ENCODE measurements at regions of chr10 and their contacts with region 1.

Region 1: GRCh38 chr10:63083904-63084689 is 49.0 kb upstream of the NRBF2 start:
- DNase-seq: peak; percentile 62
- ATAC-seq: peak; percentile 78
- H3K4me3 Mint-ChIP-seq: no peak overlapping the region
- H3K27ac Mint-ChIP-seq: no peak overlapping the region
- H3K4me1 Mint-ChIP-seq: no peaks in the 10 kb centered on the region
- H3K27me3 Mint-ChIP-seq: peaks cover 17% of the 10 kb centered on the region

Region 2: GRCh38 chr10:62437696-62438095 is 646.4 kb before region 1 on chr10:
- CTCF ChIA-PET with region 1: no interaction called
- POLR2A ChIA-PET with region 1: no interaction called
- intact Hi-C with region 1: loop called (anchors 5 to 10 kb)
- DNase-seq: no peak
- ATAC-seq: no peak
- H3K4me3 Mint-ChIP-seq: no peak overlapping the region
- H3K27ac Mint-ChIP-seq: no peak overlapping the region
- H3K4me1 Mint-ChIP-seq: peaks cover 19% of the 10 kb centered on the region
- H3K27me3 Mint-ChIP-seq: peaks cover 20% of the 10 kb centered on the region

Region 3: DNA sequence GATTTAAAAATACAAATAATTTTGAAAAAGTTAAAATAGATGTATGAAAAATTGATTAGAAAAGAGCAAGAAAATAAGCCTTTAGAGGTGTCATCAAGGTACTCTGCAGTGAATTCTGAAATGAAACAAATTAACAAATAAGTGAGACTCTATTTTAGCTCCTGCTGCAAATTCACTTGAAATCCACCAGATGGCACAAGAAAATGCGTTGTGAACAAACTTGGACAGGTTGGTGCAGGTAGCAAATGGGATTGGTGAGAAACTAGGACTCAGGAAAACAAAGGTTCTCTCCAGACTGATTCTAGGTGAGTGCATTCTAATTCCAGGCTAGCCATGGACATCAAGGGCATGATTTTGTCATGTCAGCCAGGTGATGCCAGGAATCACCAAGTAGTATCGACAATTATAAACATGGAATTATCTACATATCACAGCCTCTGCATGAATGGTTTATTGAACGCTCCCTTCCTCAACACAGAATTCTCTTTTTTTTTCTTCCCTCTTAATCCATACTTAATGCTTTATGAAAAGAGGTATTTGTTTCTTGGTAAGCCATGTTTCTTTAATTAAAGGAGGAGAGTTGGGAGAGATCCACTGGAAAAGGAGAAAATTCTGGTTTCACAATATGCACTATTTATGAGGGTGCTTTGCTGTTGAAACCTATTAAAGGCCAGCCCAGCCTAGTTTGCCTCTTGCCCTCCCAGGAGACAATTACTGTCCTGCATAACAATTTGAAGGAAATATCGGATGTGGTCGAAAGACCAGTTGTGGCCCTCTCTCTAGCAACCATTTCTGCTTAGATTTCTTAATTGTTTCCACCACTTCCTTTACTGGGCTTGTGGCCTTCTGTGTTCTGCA is 591.9 kb before region 1 on chr10:
- CTCF ChIA-PET with region 1: no interaction called
- POLR2A ChIA-PET with region 1: no interaction called
- intact Hi-C with region 1: loop called (anchors 5 kb)
- DNase-seq: no peak
- ATAC-seq: no peak
- H3K4me3 Mint-ChIP-seq: no peak overlapping the region
- H3K27ac Mint-ChIP-seq: no peak overlapping the region
- H3K4me1 Mint-ChIP-seq: no peaks in the 10 kb centered on the region
- H3K27me3 Mint-ChIP-seq: peaks cover 3% of the 10 kb centered on the region

Region 4: DNA sequence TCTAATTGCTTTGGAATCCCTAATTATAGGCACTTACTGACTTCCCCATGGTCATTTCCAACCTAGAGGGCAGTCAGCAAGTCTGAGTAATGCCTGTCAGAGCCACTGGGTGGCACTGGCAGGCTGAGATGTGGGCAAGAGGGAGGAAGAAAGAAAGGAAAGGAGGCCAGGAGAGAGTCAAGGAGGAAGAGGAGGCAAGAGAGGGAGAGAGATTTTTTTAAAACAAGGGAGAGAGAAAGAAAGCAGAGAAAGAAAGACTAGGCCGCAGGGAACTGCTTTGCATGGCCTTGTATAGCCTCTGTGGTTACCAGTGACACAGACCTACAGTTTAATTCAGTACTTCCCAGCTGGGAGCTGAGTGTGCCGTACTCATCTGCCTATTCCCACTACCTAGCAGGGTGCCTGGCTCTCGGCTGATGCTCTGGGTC is 490.0 kb before region 1 on chr10:
- CTCF ChIA-PET with region 1: interaction called, 8 read pairs
- POLR2A ChIA-PET with region 1: no interaction called
- intact Hi-C with region 1: loop called (anchors 1 kb)
- DNase-seq: peak; percentile 71
- ATAC-seq: peak; percentile 84
- H3K4me3 Mint-ChIP-seq: no peak overlapping the region
- H3K27ac Mint-ChIP-seq: no peak overlapping the region
- H3K4me1 Mint-ChIP-seq: peaks cover 4% of the 10 kb centered on the region
- H3K27me3 Mint-ChIP-seq: peaks cover 14% of the 10 kb centered on the region

Region 5: GRCh38 chr10:62610649-62611229 is 473.4 kb before region 1 on chr10:
- CTCF ChIA-PET with region 1: interaction called, 14 read pairs
- POLR2A ChIA-PET with region 1: no interaction called
- intact Hi-C with region 1: loop called (anchors 1 kb)
- DNase-seq: peak; percentile 87
- ATAC-seq: peak; percentile 79
- H3K4me3 Mint-ChIP-seq: no peak overlapping the region
- H3K27ac Mint-ChIP-seq: no peak overlapping the region
- H3K4me1 Mint-ChIP-seq: peaks cover 27% of the 10 kb centered on the region
- H3K27me3 Mint-ChIP-seq: peaks cover 14% of the 10 kb centered on the region

Region 6: DNA sequence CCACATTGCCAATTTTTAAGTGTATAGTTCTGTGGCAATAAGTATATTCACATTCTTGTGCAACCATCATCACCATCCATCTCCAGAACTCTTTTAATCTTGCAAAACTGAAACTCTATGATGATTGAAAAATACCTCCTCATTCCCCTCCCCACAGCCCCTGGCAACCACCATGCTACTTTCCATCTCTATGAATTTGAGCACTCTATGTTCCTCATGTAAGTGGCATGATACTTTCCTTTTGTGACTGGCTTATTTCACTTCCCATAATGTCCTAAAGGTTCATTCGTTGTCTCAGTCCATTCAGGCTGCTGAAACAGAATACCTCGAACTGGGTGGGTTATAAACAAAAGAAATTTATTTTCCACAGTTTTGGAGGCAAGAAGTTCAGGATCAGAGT is 244.5 kb before region 1 on chr10:
- CTCF ChIA-PET with region 1: no interaction called
- POLR2A ChIA-PET with region 1: no interaction called
- intact Hi-C with region 1: loop called in 1 of 2 experiments (anchors 5 kb)
- DNase-seq: peak; percentile 47
- ATAC-seq: peak; percentile 53
- H3K4me3 Mint-ChIP-seq: no peak overlapping the region
- H3K27ac Mint-ChIP-seq: no peak overlapping the region
- H3K4me1 Mint-ChIP-seq: peaks cover 10% of the 10 kb centered on the region
- H3K27me3 Mint-ChIP-seq: peaks cover 13% of the 10 kb centered on the region

Measured in activated CD4-positive, alpha-beta T cell treated with anti-CD3 and anti-CD28 coated beads for 36 hours (primary cell).